Left cardiac atrium (tissue), 4 donors: ENCODE measurements at regions of chr22 and their contacts with region 1.

Region 1: DNA sequence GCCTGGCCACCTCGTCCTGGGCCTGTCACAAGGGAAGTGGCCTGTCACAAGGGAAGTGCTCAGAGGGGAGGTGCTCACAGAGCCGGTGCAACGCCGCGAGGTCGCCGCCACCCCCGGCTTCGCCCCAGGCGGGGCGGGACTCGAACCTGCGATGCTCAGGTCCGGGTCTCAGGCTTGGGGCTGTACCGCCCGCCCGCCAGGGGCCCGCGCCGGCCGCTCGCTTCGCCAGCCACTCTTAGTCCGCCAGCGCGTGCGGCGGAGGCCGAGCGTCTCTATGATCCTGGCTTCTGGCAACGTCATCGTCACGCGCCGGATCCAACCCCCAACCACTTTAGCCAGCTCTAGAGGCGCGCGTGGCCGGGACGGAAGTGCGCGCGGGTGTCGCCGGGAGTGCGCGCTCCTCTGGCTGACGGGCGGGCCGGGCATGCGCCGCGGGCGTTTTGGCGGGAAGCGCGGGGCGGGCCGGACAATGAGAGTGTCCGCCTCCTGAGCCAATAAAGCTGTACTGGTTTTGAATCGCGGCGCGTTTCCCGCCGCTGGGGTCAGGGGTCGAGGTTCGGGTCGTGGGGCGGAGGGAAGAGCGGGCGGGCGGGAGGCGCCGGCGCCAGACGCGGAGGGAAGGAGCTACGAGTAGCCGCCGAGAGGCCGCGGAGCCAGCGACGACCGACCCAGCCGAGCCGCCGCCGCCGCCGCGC is at the start of gene TRMT2A:
- DNase-seq: peak; percentile 99
- ATAC-seq: peak; percentile 93 to 95
- total RNA-seq, gene TRMT2A: 26.7 to 29.3 TPM

Region 2: GRCh38 chr22:19959043-19959586 is 158.0 kb before region 1 on chr22:
- intact Hi-C with region 1: no loop called
- DNase-seq: peak; percentile 87
- ATAC-seq: peak; percentile 79 to 81

Region 3: DNA sequence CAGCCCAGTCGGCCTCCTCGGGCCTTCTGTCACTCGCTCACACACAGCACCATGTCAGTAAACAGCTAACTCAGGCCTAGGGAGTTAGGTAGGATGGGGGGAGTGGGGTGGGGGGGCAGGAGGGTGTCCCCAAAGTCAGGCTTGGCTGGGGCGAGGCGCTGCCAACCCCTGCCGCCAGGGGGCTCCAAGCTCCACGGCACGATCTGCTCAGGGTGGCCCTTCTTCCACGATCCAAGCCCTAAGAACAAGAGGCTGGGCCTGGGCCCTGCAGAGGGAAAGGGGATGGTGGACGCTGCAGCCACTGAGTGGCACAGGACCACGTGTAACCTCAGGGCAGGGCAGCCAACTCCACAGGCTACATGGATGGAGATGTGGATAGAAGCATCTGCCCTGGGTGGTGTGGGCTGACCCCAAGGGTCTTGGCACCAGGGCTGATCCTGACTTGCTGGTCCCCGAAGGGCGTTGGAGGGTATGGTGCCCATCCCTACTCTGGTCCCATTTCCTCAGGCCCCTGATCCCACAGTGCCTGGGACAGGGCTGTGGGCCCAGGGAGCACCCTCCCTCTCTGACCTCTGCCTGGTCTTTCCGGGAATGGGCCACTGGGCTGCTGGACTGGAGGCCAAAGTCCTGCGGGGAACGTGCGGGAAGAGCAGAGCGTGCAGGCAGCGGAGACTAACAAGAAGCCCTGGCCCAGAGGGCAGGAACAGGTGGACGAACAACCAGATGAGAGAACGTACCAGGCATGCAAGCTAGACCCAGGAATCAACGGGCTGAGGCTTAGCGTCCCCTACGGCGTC is 146.4 kb before region 1 on chr22:
- intact Hi-C with region 1: loop called in 1 of 2 experiments (anchors 10 kb)
- DNase-seq: peak; percentile 74
- ATAC-seq: peak; percentile 61 to 81

Region 4: DNA sequence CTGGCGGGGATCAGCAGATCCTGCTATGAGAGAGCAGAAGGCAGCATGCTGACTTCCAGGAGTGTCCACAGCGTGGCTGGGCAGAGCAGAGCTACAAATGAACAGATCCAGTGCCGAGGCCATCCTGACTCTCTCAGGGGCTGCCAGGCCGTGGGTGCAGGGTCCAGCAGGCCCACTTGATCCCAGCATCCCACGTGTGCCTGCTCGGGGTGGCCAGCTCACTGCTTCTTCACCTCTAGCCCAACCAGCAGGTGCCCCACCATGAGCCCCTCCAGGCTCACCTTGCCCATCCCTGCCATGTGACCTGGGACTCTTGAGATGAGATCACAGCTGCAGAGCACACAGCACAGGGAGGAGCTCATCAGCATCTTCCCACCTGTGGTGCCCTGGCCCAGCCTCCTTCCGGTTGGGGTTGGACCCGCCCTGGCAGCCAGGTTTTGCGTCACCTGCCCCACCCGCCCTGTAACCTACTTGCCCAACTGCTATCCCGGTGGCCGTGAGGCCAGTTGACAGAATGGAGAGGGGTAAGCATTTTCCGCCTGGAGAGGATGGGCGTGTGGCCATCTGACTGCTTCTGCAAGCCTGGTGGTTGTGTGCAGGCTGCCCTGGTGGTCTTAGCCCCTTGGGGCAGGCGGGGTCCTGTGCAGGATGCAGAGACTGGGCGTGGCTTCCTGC is 85.2 kb before region 1 on chr22:
- intact Hi-C with region 1: loop called in 1 of 2 experiments (anchors 10 kb)
- DNase-seq: no peak
- ATAC-seq: no peak

Region 5: GRCh38 chr22:20079745-20080444 is 37.2 kb before region 1 on chr22 and contains the start of gene DGCR8:
- intact Hi-C with region 1: no loop called
- DNase-seq: peak; percentile 94
- ATAC-seq: peak; percentile 97
- total RNA-seq, gene DGCR8: 13.3 to 19.9 TPM

Region 6: GRCh38 chr22:20156611-20157429 is 39.7 kb after region 1 on chr22:
- intact Hi-C with region 1: no loop called
- DNase-seq: peak; percentile 81
- ATAC-seq: peak; percentile 75 to 83